K562 (cell line): ENCODE measurements at regions of chr1 and their contacts with region 1.

Region 1: DNA sequence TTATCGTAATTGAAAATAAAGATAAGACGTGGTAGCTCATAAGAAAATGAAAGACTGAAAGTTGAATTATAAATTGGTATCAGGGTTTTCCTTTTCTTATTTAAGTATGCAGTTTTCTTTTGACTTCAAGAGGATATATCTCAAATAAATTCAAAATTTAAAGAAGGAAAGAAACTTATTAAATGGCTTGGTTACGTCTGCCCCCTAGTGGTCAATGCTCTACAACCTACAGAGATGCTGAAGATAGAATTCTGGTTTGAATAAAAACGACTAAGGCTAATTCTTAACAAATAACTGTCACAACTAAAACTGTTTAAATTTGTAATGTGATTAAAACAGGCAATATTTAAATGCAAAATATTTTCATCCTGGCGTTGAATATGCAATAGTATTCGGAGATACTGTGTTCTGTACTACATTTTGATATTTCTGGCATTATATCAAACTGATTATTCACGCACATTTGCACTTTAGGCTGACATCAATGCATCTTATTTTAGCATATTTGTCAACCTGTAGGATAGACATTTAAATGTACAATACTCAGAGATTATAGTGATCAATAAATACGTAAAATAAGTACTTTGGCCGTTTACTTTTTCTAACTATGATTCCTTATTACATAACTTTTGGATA is 26.8 kb downstream of the IFI44 start:
- DNase-seq: peak; percentile 23 to 60 (median 50)
- ATAC-seq: peak; percentile 64
- H3K4me3 ChIP-seq: no peak overlapping the region
- H3K27ac ChIP-seq: no peak overlapping the region
- H3K4me1 ChIP-seq: no peaks in the 10 kb centered on the region
- H3K27me3 ChIP-seq: no peaks in the 10 kb centered on the region
- CTCF ChIP-seq: peak; percentile 27 to 69 (median 38); a peak in 4 of 6 replicates
- EP300 ChIP-seq: no peak
- POLR2A ChIP-seq: no peak
- RAD21 ChIP-seq: peak; percentile 61 to 65

Region 2: DNA sequence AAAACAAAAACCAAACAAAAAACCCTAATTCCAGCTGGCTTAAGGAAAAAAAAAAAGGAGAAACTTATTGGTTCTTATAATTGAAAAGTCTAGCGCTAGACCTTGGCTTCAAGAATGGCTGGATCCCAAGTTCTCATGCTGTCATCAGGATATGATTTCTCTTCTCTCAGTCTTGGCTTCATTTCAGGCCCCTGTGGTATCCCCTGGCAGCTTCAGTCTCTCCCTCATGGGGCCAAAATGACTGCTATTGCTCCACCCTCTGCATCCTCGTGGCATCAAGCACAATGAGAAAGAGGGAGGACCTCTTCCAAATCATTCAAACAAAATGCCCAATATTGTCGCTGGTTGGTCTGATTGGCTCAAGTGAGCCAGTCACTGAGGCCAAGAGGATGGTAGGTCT is 550.0 kb before region 1 on chr1:
- CTCF ChIA-PET with region 1: interaction called, 6 read pairs
- POLR2A ChIA-PET with region 1: no interaction called
- in situ Hi-C with region 1: loop called (anchors 25 kb)
- intact Hi-C with region 1: loop called (anchors 2 kb)
- DNase-seq: no peak
- ATAC-seq: no peak
- H3K4me3 ChIP-seq: no peak overlapping the region
- H3K27ac ChIP-seq: no peak overlapping the region
- H3K4me1 ChIP-seq: no peaks in the 10 kb centered on the region
- H3K27me3 ChIP-seq: no peaks in the 10 kb centered on the region
- CTCF ChIP-seq: no peak
- EP300 ChIP-seq: no peak
- POLR2A ChIP-seq: no peak
- RAD21 ChIP-seq: no peak

Region 3: GRCh38 chr1:78617615-78618026 is 58.8 kb before region 1 on chr1:
- CTCF ChIA-PET with region 1: no interaction called
- POLR2A ChIA-PET with region 1: no interaction called
- in situ Hi-C with region 1: no loop called
- intact Hi-C with region 1: loop called (anchors 5 kb)
- DNase-seq: peak; percentile 8 to 58 (median 14)
- ATAC-seq: peak; percentile 51; the same call in 2 of the 3 replicates
- H3K4me3 ChIP-seq: no peak overlapping the region
- H3K27ac ChIP-seq: no peak overlapping the region
- H3K4me1 ChIP-seq: no peaks in the 10 kb centered on the region
- H3K27me3 ChIP-seq: no peaks in the 10 kb centered on the region
- CTCF ChIP-seq: peak; percentile 36 to 65 (median 62)
- EP300 ChIP-seq: no peak
- POLR2A ChIP-seq: no peak
- RAD21 ChIP-seq: peak in 1 of 2 experiments; percentile 55; a peak in 2 of 4 replicates